ENCODE measurements at regions of chr1 and their contacts with region 1.

Region 1: GRCh38 chr1:165144757-165145397 is 211.6 kb downstream of the LMX1A start:
- DNase-seq: peak; percentile 40
- H3K4me3 ChIP-seq: no peak overlapping the region
- H3K27ac ChIP-seq: no peak overlapping the region
- H3K4me1 ChIP-seq: no peaks in the 10 kb centered on the region
- H3K27me3 ChIP-seq: peaks cover 5% of the 10 kb centered on the region
- CTCF ChIP-seq: peak; percentile 39 to 71 (median 65)
- EP300 ChIP-seq: no peak
- POLR2A ChIP-seq: no peak

Region 2: DNA sequence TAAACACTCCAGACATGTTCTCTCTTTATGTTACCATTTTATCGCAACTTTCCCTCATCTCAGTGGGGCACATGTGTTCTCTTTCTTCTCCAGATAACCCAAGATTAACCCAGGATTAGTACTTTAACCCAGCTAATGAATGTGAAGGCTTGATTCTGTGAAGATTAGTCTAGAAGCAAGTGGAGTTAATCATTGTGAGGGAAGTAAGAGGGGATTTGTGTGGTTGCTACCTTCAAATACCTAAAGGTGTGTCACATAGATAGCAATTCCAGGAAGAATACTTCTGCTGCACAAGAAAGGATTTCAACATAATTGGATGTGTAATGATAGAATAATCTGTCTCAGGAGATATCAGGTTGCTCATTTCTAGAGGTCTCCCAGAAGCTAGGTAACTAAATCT is 258.8 kb before region 1 on chr1:
- in situ Hi-C with region 1: no loop called
- intact Hi-C with region 1: no loop called
- DNase-seq: no peak
- H3K4me3 ChIP-seq: no peak overlapping the region
- H3K27ac ChIP-seq: no peak overlapping the region
- H3K4me1 ChIP-seq: no peaks in the 10 kb centered on the region
- H3K27me3 ChIP-seq: no peaks in the 10 kb centered on the region
- CTCF ChIP-seq: no peak
- EP300 ChIP-seq: no peak
- POLR2A ChIP-seq: no peak

Region 3: GRCh38 chr1:165073185-165074007 is 71.5 kb before region 1 on chr1:
- in situ Hi-C with region 1: no loop called
- intact Hi-C with region 1: no loop called
- DNase-seq: no peak
- H3K4me3 ChIP-seq: no peak overlapping the region
- H3K27ac ChIP-seq: no peak overlapping the region
- H3K4me1 ChIP-seq: peaks cover 0 to 27% (median 13%) of the 10 kb centered on the region in 4 donors
- H3K27me3 ChIP-seq: no peaks in the 10 kb centered on the region
- CTCF ChIP-seq: peak; percentile 68 to 82 (median 76)
- EP300 ChIP-seq: no peak
- POLR2A ChIP-seq: no peak

Region 4: DNA sequence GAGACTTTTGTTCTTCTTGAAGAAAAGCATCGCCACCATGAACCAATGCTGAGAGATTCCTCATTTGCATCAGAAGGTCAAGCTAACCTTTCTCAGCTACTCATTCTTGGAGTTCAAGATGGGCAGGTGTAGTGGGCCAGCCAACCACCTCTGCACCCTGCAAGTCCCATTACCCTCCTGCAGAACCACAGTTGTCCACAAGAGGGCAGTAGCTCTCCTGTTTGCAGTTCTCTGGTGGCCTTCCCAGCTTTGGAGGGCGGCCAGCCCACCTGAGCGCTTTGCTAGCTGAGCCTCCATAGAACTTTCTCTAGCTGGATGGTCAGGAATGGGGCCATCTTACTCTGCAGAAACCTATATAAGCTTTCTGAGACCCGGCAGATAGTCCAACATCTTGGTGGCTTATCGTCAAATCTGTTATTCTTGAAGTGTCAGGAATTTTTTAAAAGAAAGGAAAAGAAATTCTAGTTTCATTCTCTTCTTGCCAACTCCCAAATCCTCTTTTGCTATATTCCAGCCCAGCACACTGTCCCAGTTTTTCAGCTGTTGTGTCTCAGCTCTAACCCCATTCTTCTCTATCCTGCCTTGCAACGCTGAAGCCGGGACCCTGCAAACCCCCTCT is 222.6 kb after region 1 on chr1:
- in situ Hi-C with region 1: loop called in 1 of 4 experiments (anchors 25 kb)
- intact Hi-C with region 1: no loop called
- DNase-seq: peak; percentile 83
- H3K4me3 ChIP-seq: no peak overlapping the region
- H3K27ac ChIP-seq: no peak overlapping the region
- H3K4me1 ChIP-seq: no peaks in the 10 kb centered on the region
- H3K27me3 ChIP-seq: peaks cover 26% of the 10 kb centered on the region
- CTCF ChIP-seq: peak; percentile 80 to 97 (median 94)
- EP300 ChIP-seq: no peak
- POLR2A ChIP-seq: no peak

Region 5: DNA sequence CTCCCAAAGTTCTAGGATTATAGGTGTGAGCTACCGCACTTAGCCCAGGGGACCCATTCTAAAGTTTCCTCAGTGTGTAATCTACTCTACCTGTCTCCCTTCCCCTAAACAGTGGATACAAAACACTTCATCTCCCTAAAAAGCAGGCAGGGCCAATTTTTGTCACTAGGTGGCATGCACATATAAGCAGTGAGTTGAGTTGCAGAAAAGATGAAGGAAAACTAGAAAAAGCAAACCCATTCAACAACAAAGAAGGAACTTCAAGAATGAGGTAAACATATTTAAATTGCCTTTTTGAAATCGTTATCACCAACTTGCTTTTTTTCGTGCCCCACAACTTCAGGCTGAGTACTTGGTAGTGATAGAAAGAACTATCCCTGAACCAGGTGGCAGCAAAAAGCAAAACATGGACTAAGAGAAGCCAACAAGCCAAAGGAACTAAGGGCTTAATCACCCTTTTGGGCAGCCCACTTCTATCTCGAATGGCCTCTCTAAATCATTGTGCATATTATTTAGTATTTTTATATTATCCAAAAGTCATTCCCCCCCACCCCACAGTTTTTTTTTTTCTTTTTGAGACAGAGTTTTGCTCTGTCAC is 573.1 kb after region 1 on chr1:
- in situ Hi-C with region 1: loop called in 1 of 4 experiments (anchors 25 kb)
- intact Hi-C with region 1: no loop called
- DNase-seq: peak; percentile 60
- H3K4me3 ChIP-seq: no peak overlapping the region
- H3K27ac ChIP-seq: no peak overlapping the region
- H3K4me1 ChIP-seq: no peaks in the 10 kb centered on the region
- H3K27me3 ChIP-seq: no peaks in the 10 kb centered on the region
- CTCF ChIP-seq: peak; percentile 51 to 76 (median 65)
- EP300 ChIP-seq: no peak
- POLR2A ChIP-seq: no peak